ENCODE measurements at regions of chr14 and their contacts with region 1.

Region 1: DNA sequence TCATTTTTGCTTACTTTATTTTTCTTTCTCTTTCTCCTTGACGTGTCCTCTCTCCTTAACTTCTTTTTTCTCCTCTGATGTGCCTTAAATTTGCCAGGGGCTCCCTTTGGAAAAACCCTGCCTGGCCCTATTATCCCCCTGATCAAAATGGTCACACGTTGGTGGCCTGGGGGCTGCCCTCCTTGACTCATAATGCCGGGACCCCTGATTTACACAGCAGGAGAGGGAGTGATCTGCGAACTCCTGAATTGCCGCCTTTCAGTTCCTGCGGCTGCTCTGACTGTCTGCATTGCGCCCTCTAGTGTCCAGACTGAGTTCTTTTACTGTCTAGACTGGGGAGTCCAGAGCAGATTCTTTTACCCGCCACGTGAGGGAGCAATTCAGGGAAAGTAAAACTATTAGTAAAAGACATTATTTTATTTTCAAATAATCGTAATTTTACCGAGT is 44.8 kb upstream of the GZMB start:
- DNase-seq: peak; percentile 23 to 29
- ATAC-seq: peak in 1 of 2 donors; percentile 60
- H3K4me3 ChIP-seq: peak overlapping the region; percentile 4 to 42 (median 33)
- H3K27ac ChIP-seq: no peak overlapping the region
- H3K4me1 ChIP-seq: peaks cover 0 to 3% of the 10 kb centered on the region in 2 donors
- H3K27me3 ChIP-seq: no peaks in the 10 kb centered on the region
- CTCF ChIP-seq: peak; percentile 42 to 78 (median 56)
- POLR2A ChIP-seq: no peak

Region 2: DNA sequence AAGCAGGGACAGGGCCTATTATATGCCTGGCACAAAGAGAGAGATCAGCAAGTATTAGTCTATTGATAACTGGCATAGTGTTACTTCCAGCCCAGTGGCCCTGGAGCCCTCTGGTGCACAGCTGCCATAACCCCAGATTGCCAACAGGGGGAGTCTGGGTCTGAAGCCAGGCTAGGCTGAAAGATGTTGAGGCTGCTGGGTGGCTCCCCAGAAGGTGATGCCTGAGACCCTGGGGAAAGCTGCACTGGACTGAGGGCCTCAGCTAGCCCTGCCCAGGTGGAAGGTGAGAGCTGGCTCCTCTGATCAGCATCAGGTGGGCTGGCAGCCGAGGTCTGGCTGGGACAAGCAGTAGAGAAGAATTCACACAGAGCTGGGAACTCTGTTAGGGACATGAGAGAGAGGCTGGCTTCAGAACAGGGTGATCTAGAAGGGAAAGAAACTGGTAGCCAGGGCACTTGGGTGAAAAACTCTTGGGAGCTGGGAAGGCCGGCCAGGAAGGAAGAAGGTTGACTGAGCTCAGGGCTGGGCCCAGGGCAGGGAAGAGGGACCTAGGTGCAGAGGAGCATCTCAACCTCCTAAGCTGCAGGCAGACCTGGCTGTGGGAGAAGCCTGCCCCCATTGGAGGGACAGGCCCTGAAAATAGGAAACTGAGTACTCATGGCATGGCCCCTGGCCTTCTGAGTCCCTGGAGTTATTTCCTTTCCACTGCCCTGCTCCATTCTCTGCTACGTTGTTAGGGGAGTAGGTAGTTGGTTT is 73.2 kb before region 1 on chr14:
- in situ Hi-C with region 1: no loop called
- intact Hi-C with region 1: loop called (anchors 5 kb)
- DNase-seq: no peak
- ATAC-seq: no peak
- H3K4me3 ChIP-seq: no peak overlapping the region
- H3K27ac ChIP-seq: no peak overlapping the region
- H3K4me1 ChIP-seq: no peaks in the 10 kb centered on the region
- H3K27me3 ChIP-seq: no peaks in the 10 kb centered on the region
- CTCF ChIP-seq: peak in 2 of 5 experiments; percentile 39 to 47
- POLR2A ChIP-seq: no peak

Region 3: GRCh38 chr14:24699052-24699451 is 20.2 kb after region 1 on chr14:
- in situ Hi-C with region 1: no loop called
- intact Hi-C with region 1: no loop called
- DNase-seq: no peak
- ATAC-seq: no peak
- H3K4me3 ChIP-seq: no peak overlapping the region
- H3K27ac ChIP-seq: no peak overlapping the region
- H3K4me1 ChIP-seq: no peaks in the 10 kb centered on the region
- H3K27me3 ChIP-seq: no peaks in the 10 kb centered on the region
- CTCF ChIP-seq: no peak
- POLR2A ChIP-seq: no peak

Region 4: DNA sequence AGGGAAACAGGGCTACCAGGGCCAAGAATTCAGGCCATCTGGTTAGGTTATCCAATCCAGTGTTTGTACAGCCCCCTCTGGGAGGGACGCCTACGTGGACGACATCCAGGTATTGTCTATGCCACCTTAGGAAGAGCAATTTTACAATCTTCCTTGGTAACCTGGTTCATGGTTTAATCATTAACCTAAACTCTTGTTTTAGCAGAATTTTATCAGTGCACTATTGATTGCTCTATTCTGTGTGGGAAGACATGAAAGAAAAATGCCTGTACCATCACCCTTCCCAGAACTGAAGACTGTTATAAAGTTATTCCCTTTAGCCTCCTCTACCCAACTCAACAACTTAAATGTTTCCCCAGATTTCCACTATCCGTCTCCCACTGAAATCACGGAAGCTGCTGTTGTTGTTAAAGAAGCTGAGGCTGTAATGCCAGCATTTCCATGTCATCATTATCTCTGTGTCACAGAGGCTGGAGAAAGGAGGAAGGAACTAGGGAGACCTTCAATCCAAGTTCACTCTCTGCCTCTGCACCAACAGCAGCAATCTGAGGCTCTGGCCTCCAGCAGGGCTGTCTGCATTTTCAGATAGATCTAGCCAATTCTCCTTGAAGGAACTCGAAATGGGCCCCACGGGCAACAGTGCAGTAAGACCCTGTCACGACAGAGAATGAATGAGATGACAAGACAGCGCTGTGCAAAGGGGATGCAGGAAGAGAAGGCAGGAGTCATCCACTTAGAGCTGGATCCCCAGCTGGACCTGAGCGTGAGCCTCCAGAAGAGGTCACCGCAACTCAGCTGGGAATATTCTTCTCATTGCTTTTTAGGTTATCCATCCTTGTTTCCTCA is 138.6 kb after region 1 on chr14:
- in situ Hi-C with region 1: no loop called
- intact Hi-C with region 1: no loop called
- DNase-seq: no peak
- ATAC-seq: no peak
- H3K4me3 ChIP-seq: no peak overlapping the region
- H3K27ac ChIP-seq: peak overlapping the region in 2 of 4 donors; percentile 37 to 38
- H3K4me1 ChIP-seq: no peaks in the 10 kb centered on the region
- H3K27me3 ChIP-seq: no peaks in the 10 kb centered on the region
- CTCF ChIP-seq: no peak
- POLR2A ChIP-seq: no peak